Dendritic cell treated with granulocyte-macrophage colony-stimulating factor and Interleukin-4, amounts not matched to agents 40 ng/mL and 50 ng/mL, for 4 days (primary cell): ENCODE measurements at regions of chr2 and their contacts with region 1.

Region 1: DNA sequence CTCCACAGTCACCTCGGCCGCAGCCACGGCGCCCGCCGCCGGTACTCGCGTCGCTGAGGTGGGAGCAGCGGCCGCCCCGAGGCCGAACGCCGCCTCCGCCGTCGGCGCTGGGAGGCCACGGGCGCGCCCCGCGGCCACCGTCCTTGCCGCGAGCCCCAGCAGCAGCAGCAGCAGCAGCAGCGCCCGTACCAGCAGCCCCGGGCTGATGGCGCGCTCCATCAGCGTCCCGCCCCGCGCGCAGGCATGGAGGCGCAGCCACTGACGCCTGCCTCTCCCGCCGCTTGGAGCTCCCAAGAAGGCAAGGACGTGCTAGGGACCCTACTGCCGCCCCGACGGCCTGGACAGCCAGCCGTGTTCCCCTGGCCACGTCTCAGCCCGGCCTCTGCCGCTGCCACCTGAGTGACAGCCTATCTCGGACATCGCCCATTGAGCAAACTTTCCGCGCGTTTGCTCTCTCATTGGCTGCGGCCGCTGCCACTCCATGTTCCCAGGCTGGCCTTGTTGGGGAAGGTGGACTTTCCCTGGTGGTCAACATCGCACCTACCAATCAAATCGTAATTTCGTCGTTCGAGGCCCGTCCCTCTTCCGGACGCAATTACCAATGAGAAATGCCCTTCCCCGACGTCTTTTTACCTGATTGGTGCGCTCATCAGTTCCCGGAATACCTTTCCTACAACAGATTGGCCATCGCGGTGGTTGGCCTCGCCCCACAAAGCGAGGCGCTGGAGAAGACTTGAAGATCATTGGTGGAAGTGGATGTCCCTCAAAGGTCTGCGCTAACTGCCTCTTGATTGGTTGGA is at the start of gene EIF2AK3:
- H3K4me3 Mint-ChIP-seq: no peak within 1 kb of the TSS
- H3K27ac Mint-ChIP-seq: no peak within 1 kb of the TSS
- H3K4me1 Mint-ChIP-seq: no peaks in the 10 kb centered on the region
- H3K27me3 Mint-ChIP-seq: no peaks in the 10 kb centered on the region

Region 2: DNA sequence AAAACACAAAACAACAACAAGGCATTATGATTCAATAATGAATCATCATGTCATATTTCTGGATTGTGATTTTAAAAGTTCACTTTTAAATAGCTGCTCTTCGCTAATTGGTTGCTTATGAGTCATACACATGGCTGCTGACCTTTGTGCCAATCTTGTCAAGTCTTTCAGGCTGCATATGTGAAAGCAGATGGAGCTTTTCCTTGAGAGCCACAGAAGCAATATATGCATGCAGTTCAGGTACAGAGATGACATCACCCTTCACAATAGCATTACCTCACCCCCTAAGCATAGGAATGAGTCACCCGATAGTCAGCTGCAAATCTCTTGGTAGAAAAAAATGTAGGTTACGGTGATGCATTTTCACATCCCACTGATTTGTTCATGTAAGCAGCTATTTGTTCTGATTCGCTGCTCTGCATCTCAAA is 27.2 kb before region 1 on chr2:
- intact Hi-C with region 1: loop called (anchors 2 kb)
- H3K4me3 Mint-ChIP-seq: no peak overlapping the region
- H3K27ac Mint-ChIP-seq: no peak overlapping the region
- H3K4me1 Mint-ChIP-seq: peaks cover 39% of the 10 kb centered on the region
- H3K27me3 Mint-ChIP-seq: no peaks in the 10 kb centered on the region

Region 3: GRCh38 chr2:88614497-88615157 is 12.6 kb before region 1 on chr2:
- intact Hi-C with region 1: no loop called
- H3K4me3 Mint-ChIP-seq: no peak overlapping the region
- H3K27ac Mint-ChIP-seq: no peak overlapping the region
- H3K4me1 Mint-ChIP-seq: peaks cover 4% of the 10 kb centered on the region
- H3K27me3 Mint-ChIP-seq: no peaks in the 10 kb centered on the region

Region 4: DNA sequence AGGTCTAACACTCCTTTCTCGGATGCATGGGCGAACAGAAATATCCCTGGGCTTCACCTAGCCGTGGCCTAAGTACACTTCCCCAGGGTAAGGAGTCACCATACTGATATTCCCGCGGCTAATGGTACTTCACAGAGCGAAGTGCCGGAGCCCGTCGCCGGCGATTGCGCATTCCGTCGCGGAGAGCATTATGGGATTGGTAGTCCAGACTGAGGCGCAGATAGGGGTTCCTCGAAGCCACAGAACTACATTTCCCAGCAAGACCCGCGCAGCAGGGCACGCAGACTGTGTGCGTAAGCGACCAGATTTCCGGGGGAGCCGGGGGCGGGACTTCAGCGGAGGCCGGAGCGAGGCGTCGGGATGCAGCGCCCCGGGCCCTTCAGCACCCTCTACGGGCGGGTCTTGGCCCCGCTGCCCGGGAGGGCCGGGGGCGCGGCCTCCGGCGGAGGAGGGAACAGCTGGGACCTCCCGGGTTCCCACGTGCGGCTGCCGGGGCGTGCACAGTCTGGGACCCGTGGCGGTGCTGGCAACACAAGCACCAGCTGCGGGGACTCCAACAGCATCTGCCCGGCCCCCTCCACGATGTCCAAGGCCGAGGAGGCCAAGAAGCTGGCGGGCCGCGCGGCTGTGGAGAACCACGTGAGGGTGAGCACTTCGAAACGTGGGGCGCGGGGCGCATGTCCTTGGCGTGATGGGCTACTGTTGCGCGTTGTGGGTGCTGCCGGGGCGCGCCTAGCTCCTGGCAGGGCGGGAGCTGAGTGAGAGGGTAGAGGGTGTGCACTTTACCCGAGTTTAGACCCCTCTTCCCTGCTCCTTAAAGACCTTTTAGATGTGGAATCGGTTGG is 64.3 kb after region 1 on chr2 and contains the start of gene RPIA:
- intact Hi-C with region 1: loop called (anchors 1 kb)
- H3K4me3 Mint-ChIP-seq: peak within 1 kb of the TSS; percentile 96
- H3K27ac Mint-ChIP-seq: peak within 1 kb of the TSS; percentile 93
- H3K4me1 Mint-ChIP-seq: peaks cover 39% of the 10 kb centered on the region
- H3K27me3 Mint-ChIP-seq: no peaks in the 10 kb centered on the region